Breast epithelium (tissue), 4 donors: ENCODE measurements at regions of chr7 and their contacts with region 1.

Region 1: DNA sequence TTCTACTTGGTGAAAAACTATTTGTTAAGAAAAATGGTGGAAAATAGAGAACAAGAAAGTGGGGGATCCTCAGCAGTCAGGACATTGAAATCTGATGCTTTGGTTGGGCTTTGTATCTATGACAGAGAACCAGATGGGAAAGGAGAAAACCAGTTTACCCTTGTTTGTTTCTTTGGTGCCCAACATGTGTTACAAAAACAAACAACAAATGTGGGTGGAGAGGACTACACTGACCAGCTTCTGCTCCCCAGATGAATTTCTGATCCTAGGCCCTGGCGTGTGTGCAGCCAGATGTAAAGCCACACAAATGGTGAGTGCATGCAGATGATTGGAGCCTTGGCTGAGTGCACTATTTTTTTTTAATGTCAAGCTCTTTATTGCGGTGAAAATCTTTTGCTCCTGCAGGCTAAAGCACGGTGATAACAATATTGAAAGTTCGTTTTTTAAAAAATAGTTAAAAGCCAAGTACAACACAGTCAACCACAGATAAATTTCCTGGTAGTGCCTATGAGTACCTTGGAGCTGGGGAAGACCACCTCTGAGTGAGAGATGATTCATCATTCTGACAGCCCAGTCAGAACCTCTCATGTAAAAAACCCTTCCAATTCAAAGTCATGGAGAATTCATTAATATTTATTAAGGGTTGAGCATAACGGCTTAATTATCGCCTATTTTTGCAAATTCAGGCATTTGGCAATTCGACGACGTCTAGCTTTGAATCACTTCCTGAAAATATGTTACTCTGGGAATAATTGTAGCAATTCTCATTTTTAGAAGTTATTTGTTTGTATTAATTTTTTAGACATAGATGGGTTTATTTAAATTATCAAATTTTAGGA is 163.7 kb downstream of the AGMO start:
- DNase-seq: no peak
- H3K4me3 ChIP-seq: no peak overlapping the region
- H3K27ac ChIP-seq: no peak overlapping the region
- H3K4me1 ChIP-seq: no peaks in the 10 kb centered on the region
- H3K27me3 ChIP-seq: no peaks in the 10 kb centered on the region
- CTCF ChIP-seq: no peak
- POLR2A ChIP-seq: no peak

Region 2: DNA sequence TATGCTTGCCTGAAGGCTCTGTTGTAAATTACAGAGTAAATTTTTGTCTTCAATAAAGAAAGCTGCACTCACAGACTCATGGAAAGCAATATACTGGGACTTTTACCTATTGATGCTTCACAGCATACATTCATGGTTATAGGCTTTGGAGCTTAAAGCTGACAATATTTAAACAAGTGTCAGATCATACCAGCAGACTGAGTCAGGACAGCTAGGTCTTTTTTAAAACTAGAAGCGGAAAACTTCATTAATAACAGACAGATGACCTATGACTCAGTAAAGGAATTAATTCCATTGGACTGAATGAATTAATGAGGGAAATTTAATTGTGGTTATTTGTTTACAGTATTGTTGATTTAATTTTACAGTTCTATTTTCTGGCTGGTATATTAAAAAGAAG is 329.8 kb before region 1 on chr7:
- intact Hi-C with region 1: loop called (anchors 5 kb)
- DNase-seq: no peak
- H3K4me3 ChIP-seq: no peak overlapping the region
- H3K27ac ChIP-seq: no peak overlapping the region
- H3K4me1 ChIP-seq: no peaks in the 10 kb centered on the region
- H3K27me3 ChIP-seq: no peaks in the 10 kb centered on the region
- CTCF ChIP-seq: no peak
- POLR2A ChIP-seq: no peak

Region 3: GRCh38 chr7:15723841-15724240 is 325.7 kb after region 1 on chr7:
- intact Hi-C with region 1: no loop called
- DNase-seq: no peak
- H3K4me3 ChIP-seq: no peak overlapping the region
- H3K27ac ChIP-seq: no peak overlapping the region
- H3K4me1 ChIP-seq: no peaks in the 10 kb centered on the region
- H3K27me3 ChIP-seq: no peaks in the 10 kb centered on the region
- CTCF ChIP-seq: no peak
- POLR2A ChIP-seq: no peak